ENCODE measurements at regions of chr11 and their contacts with region 1.

Region 1: DNA sequence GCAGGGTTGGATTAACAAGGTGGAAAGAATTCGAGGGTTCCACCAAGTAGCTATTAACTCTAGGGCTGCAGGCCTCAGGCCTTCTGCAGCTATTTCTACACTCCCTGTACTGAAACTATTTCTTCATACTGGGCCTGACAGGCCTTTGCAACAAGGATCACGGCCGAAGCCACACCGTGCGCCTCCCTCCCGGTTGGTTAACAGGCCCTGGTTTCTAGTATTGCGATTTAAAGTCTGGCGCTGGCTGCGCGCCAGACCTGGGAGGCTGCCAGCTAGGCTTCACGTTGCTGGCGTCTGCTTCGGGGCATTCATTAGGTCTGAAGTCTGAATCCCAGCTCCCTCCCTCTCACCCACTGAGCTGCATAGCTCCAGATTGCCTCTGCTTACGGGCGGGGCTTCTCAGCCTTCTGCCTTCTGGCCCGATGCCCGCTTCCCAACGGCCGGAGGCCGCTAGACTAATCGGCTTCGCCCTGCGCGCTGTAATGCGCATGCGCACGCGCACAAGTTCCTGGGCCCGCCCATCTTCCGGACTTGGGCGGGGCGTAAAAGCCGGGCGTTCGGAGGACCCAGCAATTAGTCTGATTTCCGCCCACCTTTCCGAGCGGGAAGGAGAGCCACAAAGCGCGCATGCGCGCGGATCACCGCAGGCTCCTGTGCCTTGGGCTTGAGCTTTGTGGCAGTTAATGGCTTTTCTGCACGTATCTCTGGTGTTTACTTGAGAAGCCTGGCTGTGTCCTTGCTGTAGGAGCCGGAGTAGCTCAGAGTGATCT is 1.6 kb downstream of the LDHA start:
- DNase-seq: peak; percentile 88 to 97 (median 96)
- H3K4me3 ChIP-seq: peak overlapping the region; percentile 91
- H3K4me3 Mint-ChIP-seq: peak overlapping the region; percentile 97 to 99 (median 98)
- H3K27ac ChIP-seq: peak overlapping the region; percentile 89
- H3K27ac Mint-ChIP-seq: peak overlapping the region; percentile 89 to 100 (median 98)
- H3K4me1 ChIP-seq: peaks cover 22% of the 10 kb centered on the region
- H3K4me1 Mint-ChIP-seq: peaks cover 33 to 56% (median 45%) of the 10 kb centered on the region in 3 donors
- H3K27me3 ChIP-seq: no peaks in the 10 kb centered on the region
- H3K27me3 Mint-ChIP-seq: peaks cover 0 to 12% of the 10 kb centered on the region in 2 donors

Region 2: GRCh38 chr11:18321980-18322711 is 73.8 kb before region 1 on chr11 and contains the starts of genes GTF2H1 and HPS5:
- CTCF ChIA-PET with region 1: interaction called, 8 read pairs
- POLR2A ChIA-PET with region 1: interaction called, 48 read pairs
- DNase-seq: peak; percentile 92 to 98 (median 96)
- H3K4me3 ChIP-seq: peak within 1 kb of the TSS; percentile 81
- H3K4me3 Mint-ChIP-seq: peak within 1 kb of the TSS; percentile 89 to 100 (median 99)
- H3K27ac ChIP-seq: peak within 1 kb of the TSS; percentile 99
- H3K27ac Mint-ChIP-seq: peak within 1 kb of the TSS; percentile 97 to 100 (median 100)
- H3K4me1 ChIP-seq: peaks cover 51% of the 10 kb centered on the region
- H3K4me1 Mint-ChIP-seq: peaks cover 69 to 88% (median 84%) of the 10 kb centered on the region in 3 donors
- H3K27me3 ChIP-seq: no peaks in the 10 kb centered on the region
- H3K27me3 Mint-ChIP-seq: no peaks in the 10 kb centered on the region
- total RNA-seq, gene GTF2H1: 60.3 to 62.0 TPM
- total RNA-seq, gene HPS5: 18.5 to 19.4 TPM

Region 3: DNA sequence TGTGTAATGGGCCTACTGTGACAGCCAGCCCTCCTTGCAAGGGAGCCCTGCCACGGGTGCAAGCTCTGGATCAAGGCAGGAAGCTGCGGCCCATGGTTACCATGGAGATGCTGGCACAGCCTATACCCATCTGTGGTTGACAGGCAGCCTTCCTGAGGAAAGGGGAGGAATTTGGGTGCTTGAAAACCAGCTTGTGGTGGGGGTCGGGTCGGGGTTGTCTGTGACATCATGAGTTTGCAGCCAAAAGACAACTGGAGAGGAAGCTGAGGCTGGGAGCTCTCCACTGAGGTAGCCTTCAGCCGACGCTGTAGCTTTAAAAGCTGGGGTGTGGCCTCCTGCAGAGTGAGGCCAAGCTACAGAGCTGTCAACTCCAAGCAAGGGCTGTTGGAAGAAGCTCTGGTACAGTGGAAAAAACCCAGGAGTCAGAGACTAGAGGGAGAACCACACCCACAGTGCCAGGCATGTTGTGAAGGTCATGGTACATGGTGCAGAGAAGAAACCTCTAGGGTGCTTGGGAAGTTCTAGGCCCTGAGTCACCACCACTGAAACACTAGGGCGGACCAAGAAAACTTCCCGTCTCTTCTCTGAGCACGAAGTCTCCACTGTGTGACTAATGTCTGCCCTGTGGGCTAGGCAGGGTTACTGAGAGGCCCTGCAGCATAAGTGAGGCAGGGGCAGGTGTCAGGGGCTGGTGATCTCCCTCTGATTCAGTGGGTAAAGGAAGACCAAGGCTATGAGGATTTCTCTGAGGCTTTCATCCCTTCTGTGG is 12.3 kb before region 1 on chr11:
- CTCF ChIA-PET with region 1: interaction called, 37 read pairs
- POLR2A ChIA-PET with region 1: interaction called, 43 read pairs
- DNase-seq: peak; percentile 43 to 79 (median 74)
- H3K4me3 ChIP-seq: peak overlapping the region; percentile 36
- H3K4me3 Mint-ChIP-seq: peak overlapping the region; percentile 15 to 77 (median 71)
- H3K27ac ChIP-seq: peak overlapping the region; percentile 71
- H3K27ac Mint-ChIP-seq: peak overlapping the region; percentile 93 to 99 (median 96)
- H3K4me1 ChIP-seq: peaks cover 27% of the 10 kb centered on the region
- H3K4me1 Mint-ChIP-seq: peaks cover 22 to 45% (median 37%) of the 10 kb centered on the region in 3 donors
- H3K27me3 ChIP-seq: no peaks in the 10 kb centered on the region
- H3K27me3 Mint-ChIP-seq: no peaks in the 10 kb centered on the region

Region 4: GRCh38 chr11:18615628-18616392 is 219.9 kb after region 1 on chr11:
- CTCF ChIA-PET with region 1: no interaction called
- POLR2A ChIA-PET with region 1: no interaction called
- DNase-seq: no peak
- H3K4me3 ChIP-seq: no peak overlapping the region
- H3K4me3 Mint-ChIP-seq: peak overlapping the region in 1 of 7 donors; percentile 18
- H3K27ac ChIP-seq: no peak overlapping the region
- H3K27ac Mint-ChIP-seq: peak overlapping the region in 6 of 8 donors; percentile 2 to 83 (median 22)
- H3K4me1 ChIP-seq: peaks cover 34% of the 10 kb centered on the region
- H3K4me1 Mint-ChIP-seq: peaks cover 41 to 60% (median 57%) of the 10 kb centered on the region in 3 donors
- H3K27me3 ChIP-seq: no peaks in the 10 kb centered on the region
- H3K27me3 Mint-ChIP-seq: no peaks in the 10 kb centered on the region